ENCODE measurements at regions of chr5 and their contacts with region 1.

Region 1: DNA sequence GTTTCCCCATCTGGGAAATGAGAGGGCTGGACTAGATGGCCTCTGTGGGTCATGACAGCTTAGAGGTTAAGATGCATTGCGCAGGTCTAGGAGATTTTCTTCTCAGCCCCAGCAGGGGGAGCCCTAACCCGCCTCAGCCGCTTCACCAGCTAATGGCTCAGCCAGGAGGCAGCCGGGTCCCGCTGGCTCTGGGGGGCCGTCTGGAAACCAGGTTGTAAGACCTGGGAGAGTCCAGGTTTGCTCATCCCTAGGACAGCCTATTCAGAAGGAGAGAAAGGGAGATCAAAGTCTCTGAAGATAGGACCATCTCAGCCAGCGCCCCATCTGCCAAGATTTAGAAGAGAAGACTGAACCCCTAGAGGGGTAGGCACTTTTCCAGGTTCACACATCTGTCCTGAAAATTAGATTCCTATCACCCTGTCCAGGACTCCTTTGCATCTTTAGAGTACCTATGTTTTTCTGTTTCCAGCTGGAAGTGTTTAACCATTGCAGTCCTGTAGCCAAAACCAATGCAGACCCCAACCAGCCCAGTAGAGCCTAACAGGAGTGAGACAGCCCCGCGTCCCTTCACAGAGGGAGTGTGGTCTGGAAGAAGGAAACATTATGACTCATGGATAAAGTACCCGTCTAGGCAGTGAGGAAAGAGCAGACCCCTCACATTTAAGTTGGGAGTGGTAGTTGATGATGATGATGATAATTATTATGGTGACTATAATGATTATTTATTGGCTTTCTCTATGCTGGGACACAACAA is 27.5 kb downstream of the SPARC start:
- DNase-seq: peak; percentile 87
- ATAC-seq: peak; percentile 94
- H3K4me3 Mint-ChIP-seq: no peak overlapping the region
- H3K27ac Mint-ChIP-seq: no peak overlapping the region
- H3K4me1 Mint-ChIP-seq: peaks cover 15% of the 10 kb centered on the region
- H3K27me3 Mint-ChIP-seq: peaks cover 12% of the 10 kb centered on the region

Region 2: GRCh38 chr5:151496041-151496484 is 163.1 kb before region 1 on chr5:
- POLR2A ChIA-PET with region 1: interaction called, 10 read pairs
- DNase-seq: no peak
- ATAC-seq: no peak
- H3K4me3 Mint-ChIP-seq: no peak overlapping the region
- H3K27ac Mint-ChIP-seq: no peak overlapping the region
- H3K4me1 Mint-ChIP-seq: peaks cover 4% of the 10 kb centered on the region
- H3K27me3 Mint-ChIP-seq: no peaks in the 10 kb centered on the region

Region 3: DNA sequence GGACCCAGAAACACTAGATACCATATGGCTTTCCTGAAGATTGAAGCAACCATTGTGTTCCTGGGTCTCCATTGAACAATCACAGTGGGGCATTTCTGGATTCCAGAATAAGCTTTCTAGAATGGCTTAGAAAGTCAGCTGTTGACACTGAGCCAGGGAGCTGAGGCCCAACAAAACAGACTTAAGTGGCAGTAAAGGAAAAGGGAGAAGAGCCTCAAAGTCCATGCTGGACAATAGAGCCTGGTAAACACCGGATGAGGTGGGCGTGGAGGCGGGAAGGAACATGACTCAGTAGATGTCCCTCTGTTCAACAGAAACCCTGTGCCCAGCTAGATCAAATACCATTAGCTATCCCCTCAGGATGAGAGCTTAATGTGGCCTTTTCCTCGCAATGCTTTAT is 12.8 kb after region 1 on chr5:
- POLR2A ChIA-PET with region 1: no interaction called
- DNase-seq: no peak
- ATAC-seq: no peak
- H3K4me3 Mint-ChIP-seq: no peak overlapping the region
- H3K27ac Mint-ChIP-seq: no peak overlapping the region
- H3K4me1 Mint-ChIP-seq: peaks cover 3% of the 10 kb centered on the region
- H3K27me3 Mint-ChIP-seq: peaks cover 4% of the 10 kb centered on the region

Measured in activated naive CD8-positive, alpha-beta T cell treated with anti-CD3 and anti-CD28 coated beads, Interleukin-2, amount 10 ng/mL, durations not matched to agents 7 days and 5 days (primary cell).